Activated CD8-positive, alpha-beta T cell treated with anti-CD3 and anti-CD28 coated beads, Interleukin-2, amount 10 ng/mL, durations not matched to agents 7 days and 5 days (primary cell): ENCODE measurements at regions of chr1 and their contacts with region 1.

Region 1: GRCh38 chr1:226186124-226187018 is at the start of gene ACBD3:
- DNase-seq: peak; percentile 92
- ATAC-seq: peak; percentile 96
- H3K4me3 Mint-ChIP-seq: peak within 1 kb of the TSS; percentile 95
- H3K27ac Mint-ChIP-seq: peak within 1 kb of the TSS; percentile 93
- H3K4me1 Mint-ChIP-seq: peaks cover 28% of the 10 kb centered on the region
- H3K27me3 Mint-ChIP-seq: no peaks in the 10 kb centered on the region
- total RNA-seq, gene ACBD3: 19.9 to 20.0 TPM

Region 2: DNA sequence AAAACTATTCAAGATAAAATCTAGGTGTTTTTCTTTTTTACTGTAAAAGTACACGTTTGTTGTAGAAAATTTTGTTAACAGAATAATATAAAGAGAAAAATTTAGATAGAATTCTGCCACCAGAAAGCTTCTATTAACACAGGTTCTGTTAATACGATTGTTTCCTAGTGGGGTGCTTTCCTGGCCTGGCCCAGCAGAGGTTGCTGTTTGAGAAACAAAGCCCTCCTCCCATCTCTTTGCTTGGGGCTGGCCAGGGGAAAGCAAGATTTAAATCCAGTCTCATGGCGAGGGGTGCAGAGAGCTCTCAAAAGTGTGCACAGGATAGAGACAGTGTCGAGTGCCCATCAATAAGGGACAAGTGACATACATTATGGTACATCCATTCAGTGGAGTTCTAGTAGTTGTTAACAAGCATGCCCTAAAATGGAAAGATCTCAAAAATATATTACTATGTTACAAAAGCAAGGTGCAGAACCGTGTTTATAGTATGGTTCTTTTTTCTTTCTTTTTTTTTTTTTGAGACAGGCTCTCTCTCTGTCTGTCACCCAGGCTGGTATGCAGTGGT is 14.7 kb after region 1 on chr1:
- CTCF ChIA-PET with region 1: interaction called, 13 read pairs
- POLR2A ChIA-PET with region 1: no interaction called
- DNase-seq: no peak
- ATAC-seq: peak; percentile 44
- H3K4me3 Mint-ChIP-seq: no peak overlapping the region
- H3K27ac Mint-ChIP-seq: no peak overlapping the region
- H3K4me1 Mint-ChIP-seq: peaks cover 2% of the 10 kb centered on the region
- H3K27me3 Mint-ChIP-seq: peaks cover 11% of the 10 kb centered on the region